Natural killer cell (primary cell): ENCODE measurements at regions of chr13 and their contacts with region 1.

Region 1: GRCh38 chr13:80386002-80386401 is 45.1 kb upstream of the SPRY2 start:
- DNase-seq: peak; percentile 28 to 52
- ATAC-seq: peak; percentile 90 to 100 (median 94)
- H3K4me3 ChIP-seq: no peak overlapping the region
- H3K4me3 Mint-ChIP-seq: peak overlapping the region; percentile 73
- H3K27ac ChIP-seq: no peak overlapping the region
- H3K27ac Mint-ChIP-seq: peak overlapping the region; percentile 16 to 53
- H3K4me1 ChIP-seq: peaks cover 7% of the 10 kb centered on the region
- H3K4me1 Mint-ChIP-seq: peaks cover 22 to 27% of the 10 kb centered on the region in 2 donors
- H3K27me3 ChIP-seq: peaks cover 2% of the 10 kb centered on the region
- H3K27me3 Mint-ChIP-seq: peaks cover 11 to 13% of the 10 kb centered on the region in 2 donors
- CTCF ChIP-seq: no peak

Region 2: GRCh38 chr13:80454245-80454644 is 68.2 kb after region 1 on chr13:
- intact Hi-C with region 1: no loop called
- DNase-seq: peak in 1 of 2 donors; percentile 18
- ATAC-seq: peak in 1 of 3 donors; percentile 54
- H3K4me3 ChIP-seq: no peak overlapping the region
- H3K4me3 Mint-ChIP-seq: no peak overlapping the region
- H3K27ac ChIP-seq: no peak overlapping the region
- H3K27ac Mint-ChIP-seq: no peak overlapping the region
- H3K4me1 ChIP-seq: peaks cover 18% of the 10 kb centered on the region
- H3K4me1 Mint-ChIP-seq: peaks cover 28 to 32% of the 10 kb centered on the region in 2 donors
- H3K27me3 ChIP-seq: no peaks in the 10 kb centered on the region
- H3K27me3 Mint-ChIP-seq: peaks cover 0 to 3% of the 10 kb centered on the region in 2 donors
- CTCF ChIP-seq: no peak

Region 3: DNA sequence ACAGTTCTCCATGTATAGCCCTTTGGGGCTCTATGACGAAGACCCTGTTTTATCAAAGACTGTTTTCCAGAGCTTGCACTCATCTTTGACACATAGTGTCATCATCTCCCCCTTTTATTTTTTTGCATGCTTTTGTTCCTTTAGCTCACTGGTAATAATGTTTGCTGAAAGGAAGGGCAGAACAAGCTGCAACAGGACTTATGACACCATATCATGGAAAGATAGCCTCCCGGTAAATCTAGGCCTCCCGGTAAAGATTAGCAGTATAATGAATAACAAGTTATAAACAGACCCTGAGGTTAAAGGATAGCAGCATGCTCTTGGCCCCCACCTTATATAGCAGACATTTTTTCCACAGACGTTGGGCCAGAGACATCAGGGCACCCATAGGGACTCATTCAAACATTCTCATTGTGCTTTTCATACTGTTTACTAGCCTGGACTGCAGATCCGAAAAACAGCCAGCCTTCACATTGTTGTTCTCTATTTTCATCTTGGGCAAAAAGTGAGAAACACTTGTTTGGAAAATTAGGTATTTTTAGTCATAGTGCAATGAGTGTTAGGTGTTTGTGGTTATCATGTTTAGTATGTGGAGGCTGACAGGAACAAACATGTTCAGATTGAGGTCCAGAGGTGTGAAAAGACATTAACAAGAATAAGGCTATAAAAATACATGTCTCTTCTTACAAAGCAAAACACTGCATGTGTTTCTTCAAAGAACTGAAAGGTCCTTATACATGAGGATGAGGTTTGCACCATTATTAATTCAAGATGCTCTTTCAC is 91.8 kb after region 1 on chr13:
- intact Hi-C with region 1: loop called (anchors 1 kb)
- DNase-seq: peak in 1 of 2 donors; percentile 43
- ATAC-seq: peak; percentile 81 to 96 (median 84)
- H3K4me3 ChIP-seq: no peak overlapping the region
- H3K4me3 Mint-ChIP-seq: peak overlapping the region; percentile 64
- H3K27ac ChIP-seq: peak overlapping the region; percentile 61
- H3K27ac Mint-ChIP-seq: peak overlapping the region; percentile 50 to 67
- H3K4me1 ChIP-seq: peaks cover 21% of the 10 kb centered on the region
- H3K4me1 Mint-ChIP-seq: peaks cover 45 to 55% of the 10 kb centered on the region in 2 donors
- H3K27me3 ChIP-seq: no peaks in the 10 kb centered on the region
- H3K27me3 Mint-ChIP-seq: peaks cover 0 to 10% of the 10 kb centered on the region in 2 donors
- CTCF ChIP-seq: no peak

Region 4: DNA sequence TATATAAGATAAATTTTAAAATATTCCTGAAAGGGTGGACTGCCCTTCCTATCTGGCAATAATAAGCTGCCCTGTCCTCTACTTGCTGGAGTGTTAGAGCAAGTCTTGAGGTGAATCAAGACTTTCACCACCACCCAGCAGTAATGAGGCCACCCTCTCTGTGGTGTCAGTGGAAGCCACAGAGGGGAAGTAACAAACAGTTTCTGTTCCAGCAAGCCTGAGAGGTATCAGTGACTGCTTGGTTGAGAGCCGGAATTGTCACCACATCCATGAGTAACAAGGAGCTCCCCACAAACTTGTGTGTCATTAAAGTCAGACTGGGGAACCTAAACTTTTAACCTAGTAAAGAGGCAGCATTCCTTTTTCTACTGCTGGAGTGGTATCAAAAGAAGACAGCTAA is 487.6 kb after region 1 on chr13:
- intact Hi-C with region 1: loop called (anchors 5 kb)
- DNase-seq: peak; percentile 33 to 49
- ATAC-seq: peak; percentile 94 to 100 (median 95)
- H3K4me3 ChIP-seq: no peak overlapping the region
- H3K4me3 Mint-ChIP-seq: peak overlapping the region; percentile 45
- H3K27ac ChIP-seq: no peak overlapping the region
- H3K27ac Mint-ChIP-seq: peak overlapping the region; percentile 36 to 73
- H3K4me1 ChIP-seq: peaks cover 4% of the 10 kb centered on the region
- H3K4me1 Mint-ChIP-seq: peaks cover 12 to 16% of the 10 kb centered on the region in 2 donors
- H3K27me3 ChIP-seq: no peaks in the 10 kb centered on the region
- H3K27me3 Mint-ChIP-seq: peaks cover 7 to 25% of the 10 kb centered on the region in 2 donors
- CTCF ChIP-seq: no peak